Tibial artery (tissue), 4 donors: ENCODE measurements at regions of chr14 and their contacts with region 1.

Region 1: DNA sequence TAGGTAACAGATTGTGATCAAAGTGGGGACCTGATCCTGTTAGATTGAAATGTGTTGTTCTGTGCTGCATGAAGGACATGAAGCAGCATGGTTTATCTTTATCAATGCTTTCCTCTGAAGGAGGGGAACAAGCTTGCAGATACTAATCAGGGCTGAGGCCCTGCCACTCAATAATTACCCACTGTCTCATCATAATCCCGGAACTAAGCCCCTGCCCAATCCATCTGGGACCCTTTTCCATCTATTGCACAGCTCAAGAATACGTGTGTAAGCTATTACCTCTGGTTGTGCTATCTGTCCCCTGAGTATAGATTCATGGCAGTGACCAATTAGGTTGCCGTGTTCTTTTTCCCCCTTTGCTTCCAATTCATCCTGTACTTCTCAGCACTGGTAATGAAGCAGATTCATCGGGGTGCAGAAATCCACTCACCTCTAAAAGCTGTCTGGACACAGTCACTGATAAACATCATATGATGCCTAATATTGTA is 67.8 kb downstream of the OTX2 start:
- DNase-seq: no peak
- H3K4me3 ChIP-seq: no peak overlapping the region
- H3K27ac ChIP-seq: no peak overlapping the region
- H3K4me1 ChIP-seq: no peaks in the 10 kb centered on the region
- H3K27me3 ChIP-seq: no peaks in the 10 kb centered on the region
- CTCF ChIP-seq: no peak

Region 2: GRCh38 chr14:56703947-56704346 is 38.5 kb before region 1 on chr14:
- intact Hi-C with region 1: no loop called
- DNase-seq: no peak
- H3K4me3 ChIP-seq: no peak overlapping the region
- H3K27ac ChIP-seq: no peak overlapping the region
- H3K4me1 ChIP-seq: no peaks in the 10 kb centered on the region
- H3K27me3 ChIP-seq: no peaks in the 10 kb centered on the region
- CTCF ChIP-seq: no peak

Region 3: GRCh38 chr14:56715938-56716337 is 26.5 kb before region 1 on chr14:
- intact Hi-C with region 1: loop called (anchors 1 kb)
- DNase-seq: no peak
- H3K4me3 ChIP-seq: no peak overlapping the region
- H3K27ac ChIP-seq: no peak overlapping the region
- H3K4me1 ChIP-seq: no peaks in the 10 kb centered on the region
- H3K27me3 ChIP-seq: peaks cover 0 to 2% of the 10 kb centered on the region in 2 donors
- CTCF ChIP-seq: no peak

Region 4: DNA sequence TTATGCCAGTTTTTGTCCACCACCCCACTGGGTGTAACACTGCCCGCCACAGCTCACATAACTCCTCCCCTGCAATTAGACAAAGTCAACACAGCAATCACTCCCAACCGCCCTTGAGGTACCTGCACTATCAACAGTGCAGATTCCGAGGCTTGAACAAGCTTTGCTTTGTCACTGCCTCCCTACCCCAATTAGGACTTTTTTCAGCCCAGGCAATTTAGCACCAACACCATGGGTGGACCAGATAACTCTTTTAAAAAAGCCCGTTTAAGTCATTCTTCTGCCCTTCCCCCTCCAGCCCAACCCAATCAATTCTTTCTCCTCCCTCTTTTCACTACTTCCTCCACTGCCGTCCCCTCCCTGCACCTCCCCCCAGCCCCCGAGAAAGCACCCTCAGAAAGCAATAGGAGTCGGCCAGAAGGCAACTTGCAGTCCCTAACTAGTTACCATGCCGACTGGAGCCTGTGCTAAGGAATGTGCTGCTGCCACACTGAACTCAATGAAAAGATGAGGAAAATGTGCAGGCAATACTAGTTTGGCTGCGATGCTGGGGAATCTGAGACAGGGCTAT is 113.5 kb after region 1 on chr14:
- intact Hi-C with region 1: no loop called
- DNase-seq: no peak
- H3K4me3 ChIP-seq: no peak overlapping the region
- H3K27ac ChIP-seq: no peak overlapping the region
- H3K4me1 ChIP-seq: no peaks in the 10 kb centered on the region
- H3K27me3 ChIP-seq: no peaks in the 10 kb centered on the region
- CTCF ChIP-seq: no peak